ENCODE measurements at regions of chr7 and their contacts with region 1.

Region 1: DNA sequence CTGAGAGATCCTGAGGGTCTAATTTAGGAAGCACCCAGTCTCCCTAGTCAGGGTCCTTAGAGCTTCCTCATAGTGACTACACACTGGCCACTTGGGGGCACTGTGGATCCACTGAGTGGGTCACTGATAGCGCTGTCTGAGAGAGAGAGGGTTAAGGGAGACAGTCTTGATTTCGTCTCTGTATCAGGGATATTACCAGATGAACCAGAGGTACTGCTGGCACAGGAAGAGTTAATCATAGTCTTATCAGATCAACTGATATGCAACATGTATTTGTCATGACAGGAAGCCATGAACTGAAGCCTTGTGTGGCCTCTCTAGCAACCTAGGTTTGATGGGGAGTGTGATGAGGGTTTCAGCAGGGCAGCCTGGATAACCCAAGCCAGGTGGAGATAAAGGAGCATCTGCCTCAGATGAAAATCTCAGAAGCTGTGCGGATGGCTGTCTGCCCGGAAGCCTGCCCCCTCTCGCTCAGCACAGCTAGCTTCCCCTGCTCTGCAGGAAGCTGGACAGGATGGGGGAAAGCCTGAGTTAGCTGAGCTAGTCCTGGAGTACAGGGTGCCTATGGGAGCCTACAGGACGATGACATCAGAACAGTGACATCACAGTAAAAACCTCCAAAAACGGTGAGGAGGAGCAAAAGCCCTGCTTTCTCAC is 214.0 kb upstream of the PRSS1 start:
- DNase-seq: peak; percentile 84 to 89
- H3K4me3 ChIP-seq: no peak overlapping the region
- H3K27ac ChIP-seq: no peak overlapping the region
- H3K4me1 ChIP-seq: peaks cover 31% of the 10 kb centered on the region
- H3K27me3 ChIP-seq: no peaks in the 10 kb centered on the region
- CTCF ChIP-seq: peak; percentile 98

Region 2: GRCh38 chr7:142338633-142339501 is 196.4 kb before region 1 on chr7:
- CTCF ChIA-PET with region 1: interaction called, 3 read pairs
- POLR2A ChIA-PET with region 1: no interaction called
- intact Hi-C with region 1: loop called (anchors 1 kb)
- DNase-seq: peak; percentile 61 to 88
- H3K4me3 ChIP-seq: no peak overlapping the region
- H3K27ac ChIP-seq: no peak overlapping the region
- H3K4me1 ChIP-seq: no peaks in the 10 kb centered on the region
- H3K27me3 ChIP-seq: no peaks in the 10 kb centered on the region
- CTCF ChIP-seq: peak; percentile 76

Region 3: DNA sequence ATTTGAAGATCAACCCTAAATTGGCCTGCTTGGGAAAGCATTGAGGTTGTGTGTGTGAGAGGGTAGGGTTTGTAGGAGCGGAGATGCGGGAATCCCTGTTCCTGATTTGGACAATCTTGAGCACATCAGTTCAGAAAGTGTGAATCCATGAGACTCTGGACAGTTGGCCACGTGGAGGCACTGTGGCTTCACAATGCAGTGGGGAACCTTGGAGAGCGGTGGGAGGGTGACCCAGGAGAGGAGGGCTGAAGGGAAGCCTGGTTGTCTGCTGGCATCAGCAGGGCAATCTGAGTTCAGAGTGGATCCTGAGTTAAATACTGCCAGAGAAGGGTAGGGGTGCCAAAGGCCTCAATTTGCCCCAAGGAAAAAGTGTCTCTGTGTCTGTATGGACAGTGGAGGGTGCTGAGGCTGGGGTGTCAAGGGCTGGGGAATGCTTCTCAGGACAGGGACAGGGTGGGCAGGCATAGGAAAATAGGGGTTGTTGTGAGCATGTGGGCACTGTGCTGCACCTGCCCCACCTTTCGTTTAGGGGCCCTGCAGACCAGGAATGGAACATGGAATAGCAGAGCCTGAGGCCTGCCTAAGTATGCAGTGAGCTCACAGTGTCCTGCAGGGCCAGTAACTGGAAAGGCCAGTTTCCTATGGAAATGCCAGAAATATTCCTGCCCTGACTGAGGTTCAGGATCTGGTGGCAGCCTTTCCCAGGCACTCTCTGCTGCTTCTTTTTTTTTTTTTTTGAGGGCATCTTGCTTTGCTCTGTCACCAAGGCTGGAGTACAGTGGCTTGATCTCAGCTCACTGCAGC is 114.5 kb before region 1 on chr7:
- CTCF ChIA-PET with region 1: no interaction called
- POLR2A ChIA-PET with region 1: no interaction called
- intact Hi-C with region 1: loop called (anchors 1 kb)
- DNase-seq: peak; percentile 74 to 79
- H3K4me3 ChIP-seq: no peak overlapping the region
- H3K27ac ChIP-seq: 0 out of 2 replicates have a peak overlapping the region, but pooled peaks have one; percentile 22
- H3K4me1 ChIP-seq: peaks cover 9% of the 10 kb centered on the region
- H3K27me3 ChIP-seq: no peaks in the 10 kb centered on the region
- CTCF ChIP-seq: peak; percentile 59; the same call in 1 of the 2 replicates

Region 4: GRCh38 chr7:142496545-142497041 is 38.7 kb before region 1 on chr7:
- CTCF ChIA-PET with region 1: interaction called, 14 read pairs
- POLR2A ChIA-PET with region 1: interaction called, 4 read pairs
- intact Hi-C with region 1: loop called (anchors 1 kb)
- DNase-seq: peak; percentile 84 to 98
- H3K4me3 ChIP-seq: peak overlapping the region; percentile 22; the same call in 1 of the 2 replicates
- H3K27ac ChIP-seq: peak overlapping the region; percentile 74
- H3K4me1 ChIP-seq: peaks cover 51% of the 10 kb centered on the region
- H3K27me3 ChIP-seq: no peaks in the 10 kb centered on the region
- CTCF ChIP-seq: peak; percentile 95

Region 5: GRCh38 chr7:142587578-142588191 is 52.4 kb after region 1 on chr7:
- CTCF ChIA-PET with region 1: interaction called, 20 read pairs
- POLR2A ChIA-PET with region 1: no interaction called
- intact Hi-C with region 1: loop called (anchors 2 kb)
- DNase-seq: peak; percentile 30 to 77
- H3K4me3 ChIP-seq: no peak overlapping the region
- H3K27ac ChIP-seq: 0 out of 2 replicates have a peak overlapping the region, but pooled peaks have one; percentile 27
- H3K4me1 ChIP-seq: peaks cover 26% of the 10 kb centered on the region
- H3K27me3 ChIP-seq: no peaks in the 10 kb centered on the region
- CTCF ChIP-seq: peak; percentile 78

Region 6: DNA sequence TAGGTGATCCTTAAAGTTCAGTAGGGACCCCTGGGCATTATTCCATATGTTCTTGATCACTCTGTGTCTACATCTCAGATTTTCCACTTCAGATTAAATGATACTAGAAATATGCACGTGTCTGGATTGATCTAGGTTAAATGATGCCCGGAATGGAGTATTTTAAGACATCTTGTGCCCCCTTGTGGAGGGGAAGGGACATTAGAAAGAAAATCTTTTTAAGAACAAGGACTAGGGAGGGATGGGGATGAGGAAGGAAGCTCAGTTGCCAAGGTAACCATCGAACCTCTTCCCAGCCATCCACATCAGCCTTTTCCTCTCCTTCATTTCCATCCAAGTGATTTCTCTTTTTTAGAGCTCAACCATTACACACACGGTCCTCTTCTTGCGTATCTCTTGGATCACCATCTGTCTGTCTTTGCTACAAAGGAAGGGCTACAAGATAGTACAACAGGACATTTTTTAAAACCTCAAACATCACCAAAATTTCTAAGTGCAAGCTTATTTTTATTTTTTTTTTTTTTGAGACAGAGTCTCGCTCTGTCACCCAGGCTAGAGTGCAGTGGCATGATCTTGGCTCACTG is 276.0 kb after region 1 on chr7:
- CTCF ChIA-PET with region 1: interaction called, 8 read pairs
- POLR2A ChIA-PET with region 1: no interaction called
- intact Hi-C with region 1: loop called (anchors 1 kb)
- DNase-seq: peak; percentile 22 to 78
- H3K4me3 ChIP-seq: no peak overlapping the region
- H3K27ac ChIP-seq: peak overlapping the region; percentile 96
- H3K4me1 ChIP-seq: peaks cover 84% of the 10 kb centered on the region
- H3K27me3 ChIP-seq: no peaks in the 10 kb centered on the region
- CTCF ChIP-seq: peak; percentile 95

Region 7: GRCh38 chr7:143214789-143215679 is 679.8 kb after region 1 on chr7:
- CTCF ChIA-PET with region 1: no interaction called
- POLR2A ChIA-PET with region 1: no interaction called
- intact Hi-C with region 1: loop called (anchors 2 kb)
- DNase-seq: peak; percentile 61 to 76
- H3K4me3 ChIP-seq: no peak overlapping the region
- H3K27ac ChIP-seq: no peak overlapping the region
- H3K4me1 ChIP-seq: no peaks in the 10 kb centered on the region
- H3K27me3 ChIP-seq: no peaks in the 10 kb centered on the region
- CTCF ChIP-seq: peak; percentile 100